ENCODE measurements at regions of chr1 and their contacts with region 1.

Region 1: DNA sequence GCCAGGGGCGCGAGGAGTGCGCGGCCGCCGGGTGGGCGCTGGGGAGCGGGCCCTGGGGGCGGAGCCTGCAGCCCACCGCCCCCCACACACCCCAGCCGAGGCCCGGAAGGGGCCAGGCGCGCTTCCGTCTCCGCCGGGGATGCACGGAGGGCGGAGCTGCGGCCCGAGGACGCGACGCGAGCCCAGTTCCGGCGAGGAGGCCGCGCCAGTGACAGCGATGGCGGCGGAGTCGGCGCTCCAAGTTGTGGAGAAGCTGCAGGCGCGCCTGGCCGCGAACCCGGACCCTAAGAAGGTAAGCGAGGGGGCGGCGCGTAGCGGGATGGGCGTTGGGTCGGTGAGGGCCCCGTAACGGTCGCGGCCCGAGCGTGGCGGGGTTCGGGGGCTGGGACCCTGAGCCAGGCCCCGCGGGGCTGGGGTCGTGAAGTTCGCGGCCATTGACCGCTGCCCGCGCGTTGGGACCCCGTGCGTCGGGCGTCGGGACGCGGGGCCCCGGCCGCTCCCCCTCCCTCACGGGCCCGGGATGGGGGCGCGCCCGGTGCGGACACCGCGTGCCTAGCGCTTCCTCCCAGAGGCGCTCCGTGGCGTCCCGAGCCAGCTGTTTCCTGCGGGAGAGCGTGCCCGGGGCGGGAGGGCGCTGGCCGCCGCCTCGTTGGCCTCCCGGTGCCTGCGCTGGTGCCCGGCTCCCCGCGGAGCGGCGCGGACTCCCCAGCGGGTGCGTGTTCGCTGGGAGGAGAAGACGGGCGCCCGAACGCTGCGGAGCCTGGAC is at the start of gene ELOA:
- DNase-seq: peak in 1 of 2 experiments; percentile 56
- H3K4me3 ChIP-seq: peak within 1 kb of the TSS; percentile 66
- H3K27ac ChIP-seq: peak within 1 kb of the TSS; percentile 29; the same call in 1 of the 2 replicates
- H3K4me1 ChIP-seq: peaks cover 11% of the 10 kb centered on the region
- H3K27me3 ChIP-seq: no peaks in the 10 kb centered on the region
- CTCF ChIP-seq: no peak
- total RNA-seq, gene ELOA: 26.2 and 26.4 TPM in 2 replicates

Region 2: GRCh38 chr1:23291706-23292105 is 451.8 kb before region 1 on chr1:
- CTCF ChIA-PET with region 1: no interaction called
- POLR2A ChIA-PET with region 1: no interaction called
- intact Hi-C with region 1: no loop called
- DNase-seq: no peak
- H3K4me3 ChIP-seq: no peak overlapping the region
- H3K27ac ChIP-seq: no peak overlapping the region
- H3K4me1 ChIP-seq: no peaks in the 10 kb centered on the region
- H3K27me3 ChIP-seq: no peaks in the 10 kb centered on the region
- CTCF ChIP-seq: no peak

Region 3: GRCh38 chr1:23507507-23507906 is 236.0 kb before region 1 on chr1:
- CTCF ChIA-PET with region 1: no interaction called
- POLR2A ChIA-PET with region 1: no interaction called
- intact Hi-C with region 1: no loop called
- DNase-seq: no peak
- H3K4me3 ChIP-seq: no peak overlapping the region
- H3K27ac ChIP-seq: no peak overlapping the region
- H3K4me1 ChIP-seq: peaks cover 8% of the 10 kb centered on the region; the same call in 1 of the 2 replicates
- H3K27me3 ChIP-seq: no peaks in the 10 kb centered on the region
- CTCF ChIP-seq: no peak

Region 4: DNA sequence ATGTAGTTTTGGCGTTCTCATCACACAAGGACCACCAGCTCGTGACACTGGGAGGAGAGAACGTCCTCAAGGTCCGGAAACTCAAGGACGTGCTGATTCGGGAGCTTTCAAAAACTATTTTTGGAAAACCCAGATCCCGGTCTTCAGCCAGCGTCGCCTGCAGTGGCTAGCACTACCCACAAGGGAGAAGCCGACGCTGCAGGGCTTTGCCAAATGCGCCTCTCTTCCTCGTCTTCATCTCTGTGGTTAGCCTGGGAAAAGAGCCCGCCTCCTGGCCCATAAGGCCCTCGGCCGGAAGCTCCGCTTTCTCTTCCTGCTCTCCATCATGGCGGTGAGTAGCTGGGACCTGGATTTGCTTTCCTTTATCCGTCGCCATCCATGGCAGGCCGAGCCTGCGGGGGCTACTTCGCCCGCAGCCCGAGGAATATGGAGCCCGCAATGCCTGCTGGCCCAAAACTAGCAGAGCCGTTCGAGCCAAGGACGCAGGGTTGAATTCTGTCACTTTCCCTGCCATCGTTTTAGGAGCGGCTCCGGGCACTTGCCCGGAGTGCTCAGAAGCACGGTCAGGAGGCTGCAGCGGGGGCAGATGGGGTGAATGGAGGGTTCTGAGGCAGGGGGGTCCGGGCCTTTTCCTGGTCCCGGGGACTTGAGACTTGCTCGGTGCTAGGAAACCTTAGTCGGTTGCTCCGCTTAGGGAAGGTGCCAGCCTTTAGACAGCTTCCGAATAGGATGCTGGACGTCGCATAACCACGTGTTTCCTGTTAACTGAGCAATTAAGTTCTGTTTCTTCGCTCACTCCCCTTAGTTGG is 51.8 kb before region 1 on chr1 and contains the start of gene RPL11:
- CTCF ChIA-PET with region 1: interaction called, 3 read pairs
- POLR2A ChIA-PET with region 1: interaction called, 3 read pairs
- intact Hi-C with region 1: loop called (anchors 5 kb)
- DNase-seq: peak; percentile 84 to 85
- H3K4me3 ChIP-seq: peak within 1 kb of the TSS; percentile 97
- H3K27ac ChIP-seq: peak within 1 kb of the TSS; percentile 93
- H3K4me1 ChIP-seq: peaks cover 25% of the 10 kb centered on the region
- H3K27me3 ChIP-seq: no peaks in the 10 kb centered on the region
- CTCF ChIP-seq: peak; percentile 55
- total RNA-seq, gene RPL11: 1,015 and 1,205 TPM in 2 replicates